ENCODE measurements at regions of chr1 and their contacts with region 1.

Region 1: DNA sequence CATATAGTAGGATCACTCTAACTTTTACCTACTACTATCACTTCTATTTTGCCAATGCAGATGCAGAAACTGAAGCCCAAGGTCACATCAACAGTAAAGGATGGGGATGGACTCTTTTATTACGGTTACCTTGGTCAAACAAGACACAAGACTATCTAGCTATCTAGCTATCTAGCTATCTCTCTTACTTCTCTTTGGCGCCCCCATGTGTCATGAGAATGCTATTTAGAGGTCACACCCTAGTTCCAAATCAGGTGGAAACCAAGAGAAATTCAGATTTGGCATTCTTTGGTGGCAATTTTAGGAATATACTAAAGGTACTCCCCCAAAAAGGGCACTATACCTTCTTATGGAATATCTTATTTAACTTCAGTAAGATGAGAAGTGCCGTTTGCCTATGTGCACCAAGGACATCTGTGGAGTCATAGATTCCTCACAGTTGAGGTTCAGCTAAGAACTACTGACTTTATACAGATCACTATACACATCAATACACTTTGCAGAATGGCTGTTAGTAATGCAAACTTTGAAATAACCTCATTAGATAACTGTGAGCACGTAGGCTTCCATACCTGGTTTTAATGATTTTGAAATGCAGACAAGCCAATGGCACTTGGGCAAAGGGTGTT is 6.7 kb downstream of the ZNF648 start:
- DNase-seq: peak; percentile 53
- H3K4me3 ChIP-seq: no peak overlapping the region; a peak in 1 of 4 replicates
- H3K27ac ChIP-seq: no peak overlapping the region
- H3K4me1 ChIP-seq: no peaks in the 10 kb centered on the region
- H3K27me3 ChIP-seq: no peaks in the 10 kb centered on the region
- CTCF ChIP-seq: peak; percentile 49
- EP300 ChIP-seq: no peak
- RAD21 ChIP-seq: peak; percentile 66

Region 2: GRCh38 chr1:182069028-182069466 is 14.2 kb after region 1 on chr1:
- CTCF ChIA-PET with region 1: interaction called, 15 read pairs
- POLR2A ChIA-PET with region 1: no interaction called
- DNase-seq: peak; percentile 84
- H3K4me3 ChIP-seq: no peak overlapping the region
- H3K27ac ChIP-seq: no peak overlapping the region
- H3K4me1 ChIP-seq: no peaks in the 10 kb centered on the region; a peak in 1 of 4 replicates
- H3K27me3 ChIP-seq: no peaks in the 10 kb centered on the region
- CTCF ChIP-seq: peak; percentile 41
- EP300 ChIP-seq: no peak
- RAD21 ChIP-seq: peak; percentile 49

Region 3: DNA sequence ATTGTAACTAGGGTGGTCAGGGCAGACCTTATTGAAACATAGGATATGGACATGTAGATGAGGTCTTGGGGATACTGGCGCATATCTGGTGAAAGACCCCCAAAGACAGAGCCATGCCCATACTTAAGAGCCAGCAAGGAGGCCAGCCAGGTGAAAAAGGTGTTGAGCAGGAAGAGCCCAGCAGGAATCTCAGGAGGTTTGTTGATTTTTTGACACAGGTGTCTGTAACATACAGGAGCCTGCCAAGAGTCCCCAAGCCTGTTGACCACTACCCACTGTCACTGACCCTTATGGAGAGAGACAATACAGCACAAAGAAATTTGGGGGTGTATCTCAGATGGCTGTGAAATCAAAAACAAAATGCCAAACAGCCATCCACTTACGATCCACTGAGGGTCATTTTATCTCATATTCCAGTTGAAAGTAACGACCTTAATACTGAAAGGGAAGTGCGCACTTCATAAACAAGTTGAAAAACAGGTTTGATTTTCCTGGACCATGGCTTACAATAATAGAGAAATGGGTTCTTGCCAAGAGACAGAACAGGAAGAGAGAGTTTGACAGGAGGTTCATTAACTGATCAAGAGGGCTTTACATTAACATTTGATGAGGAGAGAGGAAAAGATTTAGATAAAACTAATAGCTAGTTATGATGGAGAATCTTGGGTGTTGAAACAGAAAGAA is 173.2 kb after region 1 on chr1:
- CTCF ChIA-PET with region 1: no interaction called
- POLR2A ChIA-PET with region 1: no interaction called
- DNase-seq: no peak
- H3K4me3 ChIP-seq: no peak overlapping the region
- H3K27ac ChIP-seq: no peak overlapping the region
- H3K4me1 ChIP-seq: peaks cover 0 to 9% of the 10 kb centered on the region in 2 experiments; a peak in 1 of 4 replicates
- H3K27me3 ChIP-seq: no peaks in the 10 kb centered on the region
- CTCF ChIP-seq: no peak
- EP300 ChIP-seq: no peak
- RAD21 ChIP-seq: no peak

Measured in SK-N-SH (cell line).